Lower leg skin (tissue), 4 donors: ENCODE measurements at regions of chr15 and their contacts with region 1.

Region 1: DNA sequence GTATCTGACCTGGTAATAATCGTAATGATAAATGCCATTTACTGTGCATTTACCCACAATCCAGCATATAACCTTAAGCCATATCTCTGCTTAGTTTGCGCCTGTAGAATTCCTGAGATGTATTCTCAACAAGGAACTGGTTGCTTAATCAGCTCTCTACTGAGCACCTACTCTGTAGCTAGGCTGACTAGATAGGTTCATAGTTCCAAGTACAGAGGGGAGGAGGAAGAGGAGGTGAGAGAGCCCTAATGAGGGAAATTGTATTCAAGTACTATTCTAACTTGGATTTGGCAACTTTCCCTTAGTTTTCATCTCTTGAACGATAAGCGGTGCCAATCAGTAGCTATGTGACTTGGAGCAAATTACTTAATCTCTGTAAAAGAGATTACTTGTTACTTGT is 5.6 kb upstream of the AKAP13 start:
- DNase-seq: no peak
- H3K4me3 ChIP-seq: no peak overlapping the region
- CTCF ChIP-seq: no peak
- POLR2A ChIP-seq: no peak

Region 2: DNA sequence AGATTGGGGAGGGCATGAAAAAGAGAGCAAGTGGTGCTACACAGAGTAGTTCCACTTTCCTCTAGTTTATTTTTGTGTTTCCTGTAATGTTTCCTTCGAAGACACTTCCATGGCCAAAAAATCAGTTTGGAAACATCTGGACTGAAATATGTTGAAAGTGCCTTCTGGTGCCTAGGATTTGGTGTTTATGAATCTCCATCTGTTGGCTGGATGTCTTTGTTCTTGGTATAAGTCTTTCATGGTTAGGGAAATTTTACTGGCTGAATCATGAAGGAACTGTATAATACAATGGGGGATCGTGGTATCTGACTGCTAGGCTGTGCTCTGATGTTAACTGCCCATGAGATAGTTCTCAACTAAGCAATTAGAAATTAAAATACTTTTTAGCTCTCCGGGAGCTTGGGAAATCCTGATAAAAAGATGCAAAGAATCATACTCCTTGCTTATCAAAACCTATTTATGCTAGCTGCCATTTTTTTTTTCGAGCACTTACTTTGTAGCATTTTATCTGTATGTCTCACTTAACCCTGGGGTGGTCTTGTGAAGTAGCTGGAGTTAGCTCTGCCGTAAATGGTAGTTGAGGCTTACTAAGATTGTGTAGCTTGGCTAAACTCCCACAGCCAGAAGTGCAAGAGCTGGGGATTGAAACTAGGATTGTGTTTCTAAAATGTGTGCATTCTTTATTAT is 27.5 kb after region 1 on chr15:
- intact Hi-C with region 1: loop called (anchors 2 kb)
- DNase-seq: no peak
- H3K4me3 ChIP-seq: no peak overlapping the region
- CTCF ChIP-seq: no peak
- POLR2A ChIP-seq: no peak